ENCODE measurements at regions of chr22 and their contacts with region 1.

Region 1: GRCh38 chr22:46013460-46014416 is 36.8 kb upstream of the WNT7B start:
- DNase-seq: peak; percentile 97
- H3K4me3 ChIP-seq: peak overlapping the region; percentile 59 to 70 (median 66)
- H3K27ac ChIP-seq: peak overlapping the region; percentile 88 to 97 (median 95)
- H3K4me1 ChIP-seq: peaks cover 26 to 46% (median 38%) of the 10 kb centered on the region in 4 donors
- H3K27me3 ChIP-seq: no peaks in the 10 kb centered on the region
- CTCF ChIP-seq: peak; percentile 62 to 74 (median 66)
- EP300 ChIP-seq: no peak
- POLR2A ChIP-seq: peak; percentile 49

Region 2: DNA sequence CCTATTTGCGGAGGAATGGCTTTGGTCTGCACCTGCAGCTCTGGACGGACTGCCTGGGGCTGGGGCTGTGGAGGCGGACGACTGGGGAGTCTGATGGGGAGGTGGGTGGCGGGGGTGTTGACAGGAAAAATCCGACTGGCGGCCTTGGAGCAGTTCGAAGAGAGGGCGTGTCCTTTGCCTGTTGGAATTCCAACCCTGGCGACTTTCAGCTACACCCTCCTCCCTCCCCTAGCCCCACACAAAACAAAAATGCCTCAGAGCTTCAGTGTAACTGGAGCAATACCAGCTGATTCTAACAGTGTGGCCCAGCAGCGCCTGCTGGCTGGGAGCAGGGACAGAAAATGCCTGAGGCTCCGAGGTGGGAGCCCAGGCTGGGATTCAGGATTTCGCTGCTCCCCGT is 256.7 kb before region 1 on chr22:
- intact Hi-C with region 1: no loop called
- DNase-seq: no peak
- H3K4me3 ChIP-seq: peak overlapping the region in 2 of 4 donors; percentile 12 to 15
- H3K27ac ChIP-seq: peak overlapping the region in 1 of 4 donors; percentile 37
- H3K4me1 ChIP-seq: peaks cover 15 to 41% (median 34%) of the 10 kb centered on the region in 4 donors
- H3K27me3 ChIP-seq: no peaks in the 10 kb centered on the region
- CTCF ChIP-seq: peak in 1 of 3 experiments; percentile 36
- EP300 ChIP-seq: no peak
- POLR2A ChIP-seq: no peak

Region 3: GRCh38 chr22:46071451-46072109 is 57.8 kb after region 1 on chr22:
- intact Hi-C with region 1: loop called (anchors 5 kb)
- DNase-seq: peak; percentile 97
- H3K4me3 ChIP-seq: peak overlapping the region; percentile 85 to 92 (median 88)
- H3K27ac ChIP-seq: peak overlapping the region; percentile 92 to 98 (median 96)
- H3K4me1 ChIP-seq: peaks cover 43 to 71% (median 66%) of the 10 kb centered on the region in 4 donors
- H3K27me3 ChIP-seq: no peaks in the 10 kb centered on the region
- CTCF ChIP-seq: no peak
- EP300 ChIP-seq: no peak
- POLR2A ChIP-seq: peak; percentile 35

Measured in esophagus muscularis mucosa (tissue), 4 donors.